ENCODE measurements at regions of chr9 and their contacts with region 1.

Region 1: GRCh38 chr9:4832786-4833579 is 40.2 kb downstream of the RCL1 start:
- DNase-seq: peak; percentile 48
- H3K4me3 Mint-ChIP-seq: peak overlapping the region; percentile 53
- H3K27ac Mint-ChIP-seq: peak overlapping the region; percentile 96
- H3K4me1 Mint-ChIP-seq: peaks cover 60% of the 10 kb centered on the region
- H3K27me3 Mint-ChIP-seq: no peaks in the 10 kb centered on the region

Region 2: GRCh38 chr9:4662108-4662988 is 170.6 kb before region 1 on chr9 and contains the start of gene PLPP6:
- intact Hi-C with region 1: loop called (anchors 5 kb)
- DNase-seq: peak; percentile 73
- H3K4me3 Mint-ChIP-seq: peak within 1 kb of the TSS; percentile 89
- H3K27ac Mint-ChIP-seq: peak within 1 kb of the TSS; percentile 88
- H3K4me1 Mint-ChIP-seq: peaks cover 59% of the 10 kb centered on the region
- H3K27me3 Mint-ChIP-seq: peaks cover 15% of the 10 kb centered on the region
- total RNA-seq, gene PLPP6: 5.3 and 5.7 TPM in 2 replicates

Region 3: GRCh38 chr9:4792572-4793458 is 40.2 kb before region 1 on chr9 and contains the start of gene RCL1:
- intact Hi-C with region 1: loop called (anchors 1 kb)
- DNase-seq: peak; percentile 99
- H3K4me3 Mint-ChIP-seq: peak within 1 kb of the TSS; percentile 96
- H3K27ac Mint-ChIP-seq: peak within 1 kb of the TSS; percentile 96
- H3K4me1 Mint-ChIP-seq: peaks cover 62% of the 10 kb centered on the region
- H3K27me3 Mint-ChIP-seq: no peaks in the 10 kb centered on the region
- total RNA-seq, gene RCL1: 53.3 and 53.4 TPM in 2 replicates

Region 4: GRCh38 chr9:4866239-4866969 is 33.4 kb after region 1 on chr9:
- intact Hi-C with region 1: loop called (anchors 1 kb)
- DNase-seq: no peak
- H3K4me3 Mint-ChIP-seq: peak overlapping the region; percentile 45
- H3K27ac Mint-ChIP-seq: peak overlapping the region; percentile 90
- H3K4me1 Mint-ChIP-seq: peaks cover 36% of the 10 kb centered on the region
- H3K27me3 Mint-ChIP-seq: no peaks in the 10 kb centered on the region

Region 5: GRCh38 chr9:4970970-4971641 is 138.1 kb after region 1 on chr9:
- intact Hi-C with region 1: loop called (anchors 1 kb)
- DNase-seq: peak; percentile 62
- H3K4me3 Mint-ChIP-seq: no peak overlapping the region
- H3K27ac Mint-ChIP-seq: no peak overlapping the region
- H3K4me1 Mint-ChIP-seq: peaks cover 14% of the 10 kb centered on the region
- H3K27me3 Mint-ChIP-seq: no peaks in the 10 kb centered on the region

Region 6: GRCh38 chr9:5586391-5586802 is 753.4 kb after region 1 on chr9:
- intact Hi-C with region 1: loop called (anchors 5 kb)
- DNase-seq: peak; percentile 26
- H3K4me3 Mint-ChIP-seq: peak overlapping the region; percentile 35
- H3K27ac Mint-ChIP-seq: peak overlapping the region; percentile 95
- H3K4me1 Mint-ChIP-seq: peaks cover 64% of the 10 kb centered on the region
- H3K27me3 Mint-ChIP-seq: no peaks in the 10 kb centered on the region